ENCODE measurements at regions of chr1 and their contacts with region 1.

Region 1: GRCh38 chr1:53860967-53861411 is 22.9 kb upstream of the NDC1 start:
- DNase-seq: peak in 8 of 9 experiments; percentile 15 to 75 (median 50)
- ATAC-seq: peak; percentile 83
- H3K4me3 ChIP-seq: no peak overlapping the region
- H3K4me3 Mint-ChIP-seq: no peak overlapping the region
- H3K27ac ChIP-seq: no peak overlapping the region
- H3K27ac Mint-ChIP-seq: no peak overlapping the region
- H3K4me1 ChIP-seq: no peaks in the 10 kb centered on the region
- H3K4me1 Mint-ChIP-seq: no peaks in the 10 kb centered on the region
- H3K27me3 ChIP-seq: no peaks in the 10 kb centered on the region
- H3K27me3 Mint-ChIP-seq: no peaks in the 10 kb centered on the region
- CTCF ChIP-seq: peak; percentile 79

Region 2: DNA sequence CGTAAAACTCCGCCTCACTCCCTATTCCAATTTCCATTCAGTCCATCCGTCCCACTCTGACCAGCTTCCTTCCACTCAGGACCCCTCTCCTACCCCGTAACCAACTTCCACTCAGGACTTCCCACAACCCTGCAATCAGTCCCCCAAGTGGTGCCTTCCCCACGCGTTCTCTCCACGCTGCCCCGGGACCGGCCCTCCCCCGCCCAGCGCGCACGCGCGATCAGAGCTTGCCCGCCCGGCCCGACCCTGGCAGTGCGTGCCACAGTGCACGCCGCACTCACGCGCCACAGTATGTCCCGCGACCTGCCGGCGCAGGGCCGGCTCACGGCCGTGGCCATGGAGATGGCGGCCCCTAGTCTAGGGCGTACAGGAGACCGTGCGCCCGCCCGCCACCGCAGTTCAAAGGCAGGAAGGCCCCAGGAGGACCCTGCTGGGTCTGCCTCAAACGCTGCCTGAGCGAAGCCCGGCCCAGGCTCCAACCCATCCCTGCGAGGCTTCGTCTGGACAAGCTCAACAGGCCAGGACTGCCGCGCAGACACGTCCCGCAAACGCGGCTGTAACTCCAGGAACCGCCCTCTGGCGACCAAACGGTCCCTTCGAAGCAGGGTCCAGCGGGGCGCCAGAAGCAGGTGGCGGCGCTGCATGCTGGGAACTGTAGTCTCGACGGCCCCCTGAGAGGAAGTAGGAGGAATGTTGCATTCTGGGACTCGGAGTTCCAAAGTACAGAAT is 22.9 kb before region 1 on chr1 and contains the start of gene NDC1:
- CTCF ChIA-PET with region 1: interaction called, 21 read pairs
- POLR2A ChIA-PET with region 1: no interaction called
- intact Hi-C with region 1: no loop called
- DNase-seq: peak; percentile 77 to 96 (median 88)
- ATAC-seq: peak; percentile 90
- H3K4me3 ChIP-seq: peak within 1 kb of the TSS; percentile 82 to 93
- H3K4me3 Mint-ChIP-seq: peak within 1 kb of the TSS; percentile 91
- H3K27ac ChIP-seq: peak within 1 kb of the TSS; percentile 91 to 100
- H3K27ac Mint-ChIP-seq: peak within 1 kb of the TSS; percentile 98
- H3K4me1 ChIP-seq: peaks cover 16% of the 10 kb centered on the region
- H3K4me1 Mint-ChIP-seq: peaks cover 26% of the 10 kb centered on the region
- H3K27me3 ChIP-seq: no peaks in the 10 kb centered on the region
- H3K27me3 Mint-ChIP-seq: peaks cover 3% of the 10 kb centered on the region
- CTCF ChIP-seq: no peak
- total RNA-seq, gene NDC1: 6.1 to 6.6 TPM

Region 3: DNA sequence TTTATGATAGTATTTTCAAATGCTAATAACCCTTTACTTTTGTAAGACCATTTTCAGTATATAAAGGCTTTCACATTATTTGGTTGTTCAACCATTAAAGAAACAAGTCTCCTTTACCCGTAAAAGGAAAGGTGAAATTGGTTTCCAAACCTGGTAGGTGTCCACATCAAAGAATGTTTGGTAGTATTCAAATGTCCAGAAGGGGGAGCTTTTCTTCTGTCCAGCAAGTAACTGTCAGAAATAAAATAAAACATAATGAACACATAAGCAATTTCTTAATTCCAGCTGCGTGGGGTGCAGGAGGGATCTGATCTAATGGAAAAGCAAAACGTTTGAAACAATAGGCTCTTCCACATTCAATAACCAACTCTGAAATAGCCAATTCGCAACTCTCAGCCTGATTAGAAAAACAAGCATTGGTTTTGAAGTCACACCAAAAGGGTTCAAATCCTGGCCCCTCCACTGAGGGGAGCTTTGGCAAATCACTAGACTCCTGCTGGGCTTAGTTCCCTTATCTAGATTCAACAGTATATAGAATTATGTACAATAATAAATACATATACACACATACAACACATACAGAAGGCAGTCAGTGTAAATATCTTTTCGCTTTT is 17.6 kb after region 1 on chr1:
- CTCF ChIA-PET with region 1: interaction called, 51 read pairs
- POLR2A ChIA-PET with region 1: interaction called, 3 read pairs
- intact Hi-C with region 1: no loop called
- DNase-seq: peak in 2 of 9 experiments; percentile 40 to 51
- ATAC-seq: no peak
- H3K4me3 ChIP-seq: no peak overlapping the region
- H3K4me3 Mint-ChIP-seq: no peak overlapping the region
- H3K27ac ChIP-seq: no peak overlapping the region
- H3K27ac Mint-ChIP-seq: no peak overlapping the region
- H3K4me1 ChIP-seq: no peaks in the 10 kb centered on the region
- H3K4me1 Mint-ChIP-seq: peaks cover 8% of the 10 kb centered on the region
- H3K27me3 ChIP-seq: no peaks in the 10 kb centered on the region
- H3K27me3 Mint-ChIP-seq: no peaks in the 10 kb centered on the region
- CTCF ChIP-seq: no peak

Region 4: GRCh38 chr1:53959664-53960250 is 98.8 kb after region 1 on chr1:
- CTCF ChIA-PET with region 1: interaction called, 147 read pairs
- POLR2A ChIA-PET with region 1: interaction called, 7 read pairs
- intact Hi-C with region 1: loop called (anchors 1 kb)
- DNase-seq: peak in 3 of 9 experiments; percentile 17 to 70 (median 60)
- ATAC-seq: peak; percentile 93
- H3K4me3 ChIP-seq: no peak overlapping the region
- H3K4me3 Mint-ChIP-seq: no peak overlapping the region
- H3K27ac ChIP-seq: no peak overlapping the region
- H3K27ac Mint-ChIP-seq: no peak overlapping the region
- H3K4me1 ChIP-seq: no peaks in the 10 kb centered on the region
- H3K4me1 Mint-ChIP-seq: peaks cover 1% of the 10 kb centered on the region
- H3K27me3 ChIP-seq: no peaks in the 10 kb centered on the region
- H3K27me3 Mint-ChIP-seq: no peaks in the 10 kb centered on the region
- CTCF ChIP-seq: peak; percentile 76

Region 5: GRCh38 chr1:54810100-54810942 is 949.3 kb after region 1 on chr1:
- CTCF ChIA-PET with region 1: interaction called, 8 read pairs
- POLR2A ChIA-PET with region 1: no interaction called
- intact Hi-C with region 1: loop called in 1 of 2 experiments (anchors 1 kb)
- DNase-seq: peak; percentile 46 to 81 (median 64)
- ATAC-seq: peak; percentile 76
- H3K4me3 ChIP-seq: no peak overlapping the region
- H3K4me3 Mint-ChIP-seq: no peak overlapping the region
- H3K27ac ChIP-seq: no peak overlapping the region
- H3K27ac Mint-ChIP-seq: no peak overlapping the region
- H3K4me1 ChIP-seq: peaks cover 4% of the 10 kb centered on the region
- H3K4me1 Mint-ChIP-seq: no peaks in the 10 kb centered on the region
- H3K27me3 ChIP-seq: no peaks in the 10 kb centered on the region
- H3K27me3 Mint-ChIP-seq: no peaks in the 10 kb centered on the region
- CTCF ChIP-seq: peak; percentile 69

Region 6: DNA sequence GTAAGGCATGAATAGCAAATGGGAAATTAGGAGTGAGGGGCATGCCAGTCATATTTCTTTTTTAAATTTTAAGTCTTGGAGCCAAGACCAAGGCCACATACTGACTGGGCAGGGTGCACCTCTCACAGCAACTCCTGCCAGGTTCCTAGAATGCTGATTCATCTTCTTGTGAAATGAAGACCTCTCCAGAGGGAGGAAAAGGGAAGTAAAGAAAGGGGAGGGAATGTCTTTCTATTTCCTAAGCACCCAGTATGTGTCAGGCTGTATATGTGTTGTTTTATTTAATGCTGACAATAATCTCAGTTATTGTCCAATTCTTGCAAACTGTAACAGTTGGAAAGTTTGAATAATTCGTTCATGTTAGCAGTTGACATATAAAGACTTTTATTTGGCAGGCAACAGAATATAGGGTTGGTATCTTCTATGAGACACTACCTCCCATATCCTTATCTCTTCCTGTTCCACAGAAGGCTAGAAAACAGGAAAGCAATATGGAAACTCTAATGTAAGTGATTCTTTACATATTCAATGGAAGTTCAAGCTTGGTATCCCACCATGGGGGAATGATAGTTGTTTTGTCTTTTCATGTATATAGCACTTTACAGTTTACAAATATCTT is 1613.3 kb after region 1 on chr1:
- CTCF ChIA-PET with region 1: no interaction called
- POLR2A ChIA-PET with region 1: no interaction called
- intact Hi-C with region 1: no loop called
- DNase-seq: no peak
- ATAC-seq: no peak
- H3K4me3 ChIP-seq: no peak overlapping the region
- H3K4me3 Mint-ChIP-seq: no peak overlapping the region
- H3K27ac ChIP-seq: no peak overlapping the region
- H3K27ac Mint-ChIP-seq: no peak overlapping the region
- H3K4me1 ChIP-seq: no peaks in the 10 kb centered on the region
- H3K4me1 Mint-ChIP-seq: no peaks in the 10 kb centered on the region
- H3K27me3 ChIP-seq: no peaks in the 10 kb centered on the region
- H3K27me3 Mint-ChIP-seq: peaks cover 23% of the 10 kb centered on the region
- CTCF ChIP-seq: no peak

Measured in CD8-positive, alpha-beta T cell (primary cell).